ENCODE measurements at regions of chr6 and their contacts with region 1.

Region 1: GRCh38 chr6:100099189-100100074 is 105.4 kb upstream of the MCHR2 start:
- DNase-seq: peak; percentile 38
- H3K4me3 Mint-ChIP-seq: no peak overlapping the region
- H3K27ac Mint-ChIP-seq: no peak overlapping the region
- H3K4me1 Mint-ChIP-seq: peaks cover 4% of the 10 kb centered on the region
- H3K27me3 Mint-ChIP-seq: no peaks in the 10 kb centered on the region
- CTCF ChIP-seq: peak; percentile 26

Region 2: GRCh38 chr6:99894815-99895214 is 204.6 kb before region 1 on chr6:
- CTCF ChIA-PET with region 1: interaction called, 11 read pairs
- POLR2A ChIA-PET with region 1: no interaction called
- intact Hi-C with region 1: no loop called
- DNase-seq: no peak
- H3K4me3 Mint-ChIP-seq: no peak overlapping the region
- H3K27ac Mint-ChIP-seq: no peak overlapping the region
- H3K4me1 Mint-ChIP-seq: no peaks in the 10 kb centered on the region
- H3K27me3 Mint-ChIP-seq: no peaks in the 10 kb centered on the region
- CTCF ChIP-seq: no peak

Region 3: DNA sequence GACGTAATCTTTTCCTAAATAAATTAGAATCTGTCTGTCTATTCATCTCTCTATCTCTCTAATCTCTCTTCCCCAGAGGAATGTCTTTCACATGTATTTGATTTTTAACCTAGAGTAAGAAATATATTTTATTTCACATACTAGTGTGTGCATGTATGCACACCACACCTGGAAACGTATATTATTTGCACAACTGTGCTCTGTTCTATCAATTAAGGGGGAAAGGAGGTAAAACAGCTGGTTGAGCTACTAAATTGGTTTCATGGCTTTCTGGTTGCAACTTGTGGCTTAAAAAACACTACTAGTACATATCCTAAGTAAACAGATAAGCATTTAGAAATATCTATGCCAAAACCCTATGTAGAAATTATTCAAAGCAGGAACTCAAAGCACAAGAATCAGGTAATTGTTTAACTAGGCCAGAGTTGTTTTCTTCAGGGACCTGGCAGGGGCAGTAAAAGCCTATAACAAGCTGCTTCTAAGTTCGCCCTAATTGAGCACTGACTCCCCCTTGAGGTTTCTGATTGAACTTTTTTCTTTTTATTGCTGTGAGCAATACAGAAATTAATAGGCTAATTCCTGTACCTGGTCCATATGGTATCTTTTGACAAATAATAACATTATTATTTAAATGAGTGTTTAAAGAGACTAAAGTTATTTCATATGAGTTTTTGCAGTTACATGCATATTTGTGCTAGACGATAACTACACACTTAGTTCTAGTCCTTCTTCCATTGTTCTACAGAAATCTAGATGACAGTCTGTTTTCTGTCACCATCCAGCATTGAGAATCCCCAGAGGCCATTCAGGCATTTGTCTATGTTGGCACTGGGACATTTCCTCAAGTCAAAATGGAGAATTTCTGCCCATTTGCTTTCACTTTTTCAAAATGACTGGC is 194.0 kb before region 1 on chr6:
- CTCF ChIA-PET with region 1: interaction called, 10 read pairs
- POLR2A ChIA-PET with region 1: no interaction called
- intact Hi-C with region 1: loop called (anchors 1 kb)
- DNase-seq: peak; percentile 71
- H3K4me3 Mint-ChIP-seq: no peak overlapping the region
- H3K27ac Mint-ChIP-seq: no peak overlapping the region
- H3K4me1 Mint-ChIP-seq: no peaks in the 10 kb centered on the region
- H3K27me3 Mint-ChIP-seq: no peaks in the 10 kb centered on the region
- CTCF ChIP-seq: peak; percentile 74

Region 4: DNA sequence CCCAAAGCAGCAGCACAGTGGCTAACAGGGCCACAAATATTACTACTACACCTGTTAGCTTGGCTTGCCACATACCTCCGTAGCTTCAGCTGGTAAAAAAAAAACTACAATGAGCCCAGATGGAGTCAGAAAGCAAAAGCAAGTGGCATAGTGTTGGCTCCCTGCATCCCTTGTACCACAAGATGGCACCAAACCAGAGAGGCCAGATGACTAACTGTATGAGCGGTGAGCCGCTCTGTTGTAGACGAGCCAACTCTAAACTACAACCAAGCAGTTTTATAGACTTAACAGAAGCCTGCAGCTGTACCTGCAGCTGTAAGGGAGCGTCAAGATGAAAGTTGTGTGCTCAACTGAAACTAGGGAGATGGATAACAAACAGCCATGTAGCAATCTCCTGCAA is 20.9 kb before region 1 on chr6:
- CTCF ChIA-PET with region 1: interaction called, 24 read pairs
- POLR2A ChIA-PET with region 1: no interaction called
- intact Hi-C with region 1: loop called (anchors 1 kb)
- DNase-seq: peak; percentile 77
- H3K4me3 Mint-ChIP-seq: no peak overlapping the region
- H3K27ac Mint-ChIP-seq: no peak overlapping the region
- H3K4me1 Mint-ChIP-seq: peaks cover 2% of the 10 kb centered on the region
- H3K27me3 Mint-ChIP-seq: no peaks in the 10 kb centered on the region
- CTCF ChIP-seq: peak; percentile 41

Region 5: DNA sequence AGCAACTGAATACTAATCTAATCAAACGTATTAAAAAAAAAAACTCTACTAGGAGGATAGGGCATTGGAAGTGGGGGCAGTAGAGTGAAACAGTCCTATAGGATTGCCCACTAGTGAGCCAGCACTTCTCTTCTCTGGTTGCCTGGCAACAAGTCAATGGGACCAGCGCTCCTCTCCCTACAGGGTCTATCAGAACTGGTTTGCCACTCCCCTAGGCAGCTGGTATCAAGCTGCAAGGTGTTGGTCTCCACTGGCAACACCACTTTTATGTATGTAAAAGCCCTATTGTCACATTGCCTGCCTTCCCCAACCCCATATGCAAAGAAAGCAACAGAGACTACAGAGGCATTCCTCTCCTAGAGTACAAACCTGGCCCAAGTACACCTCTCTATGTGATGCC is 61.5 kb after region 1 on chr6:
- CTCF ChIA-PET with region 1: no interaction called
- POLR2A ChIA-PET with region 1: no interaction called
- intact Hi-C with region 1: no loop called
- DNase-seq: no peak
- H3K4me3 Mint-ChIP-seq: no peak overlapping the region
- H3K27ac Mint-ChIP-seq: no peak overlapping the region
- H3K4me1 Mint-ChIP-seq: no peaks in the 10 kb centered on the region
- H3K27me3 Mint-ChIP-seq: no peaks in the 10 kb centered on the region
- CTCF ChIP-seq: no peak

Measured in MCF 10A (cell line).